Motor neuron (in vitro differentiated cells): ENCODE measurements at regions of chr3 and their contacts with region 1.

Region 1: GRCh38 chr3:39541917-39542329 is 74.4 kb downstream of the MOBP start:
- ATAC-seq: peak in 2 of 8 experiments; percentile 29 to 52
- H3K4me3 ChIP-seq: no peak overlapping the region
- H3K27ac ChIP-seq: no peak overlapping the region
- H3K4me1 ChIP-seq: no peaks in the 10 kb centered on the region

Region 2: GRCh38 chr3:39279745-39280517 is 262.0 kb before region 1 on chr3 and contains the start of gene CX3CR1:
- in situ Hi-C with region 1: no loop called
- ATAC-seq: peak in 2 of 8 experiments; percentile 33 to 39
- H3K4me3 ChIP-seq: no peak within 1 kb of the TSS
- H3K27ac ChIP-seq: no peak within 1 kb of the TSS
- H3K4me1 ChIP-seq: no peaks in the 10 kb centered on the region
- total RNA-seq, gene CX3CR1: 0.08 to 0.40 (median 0.19) TPM in 6 of 8 experiments, not detected in the others

Region 3: GRCh38 chr3:39626198-39626597 is 84.3 kb after region 1 on chr3:
- in situ Hi-C with region 1: no loop called
- ATAC-seq: no peak
- H3K4me3 ChIP-seq: no peak overlapping the region
- H3K27ac ChIP-seq: no peak overlapping the region
- H3K4me1 ChIP-seq: no peaks in the 10 kb centered on the region

Region 4: GRCh38 chr3:39671116-39671515 is 129.2 kb after region 1 on chr3:
- in situ Hi-C with region 1: loop called in 1 of 9 experiments (anchors 25 kb)
- ATAC-seq: no peak
- H3K4me3 ChIP-seq: no peak overlapping the region
- H3K27ac ChIP-seq: no peak overlapping the region
- H3K4me1 ChIP-seq: no peaks in the 10 kb centered on the region

Region 5: DNA sequence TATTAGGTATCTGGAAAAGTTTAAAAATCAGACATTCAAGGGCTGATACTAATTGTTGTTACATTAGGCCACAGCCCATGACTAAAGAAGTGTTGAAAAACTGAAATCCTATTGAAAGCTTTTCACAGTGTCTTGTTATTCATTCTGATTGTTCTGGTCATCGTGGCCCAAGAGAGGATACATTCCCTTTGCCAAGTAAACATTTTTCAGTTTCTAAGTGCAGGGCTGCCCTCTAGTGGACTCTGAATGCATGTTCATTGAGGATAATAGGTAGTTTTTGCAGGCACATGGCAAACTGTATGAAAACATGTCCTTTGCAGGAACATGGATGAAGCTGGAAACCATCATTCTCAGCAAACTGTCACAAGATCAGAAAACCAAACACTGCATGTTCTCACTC is 448.6 kb after region 1 on chr3:
- in situ Hi-C with region 1: loop called in 1 of 9 experiments (anchors 25 kb)
- ATAC-seq: peak in 3 of 8 experiments; percentile 21 to 42 (median 24)
- H3K4me3 ChIP-seq: no peak overlapping the region
- H3K27ac ChIP-seq: no peak overlapping the region
- H3K4me1 ChIP-seq: no peaks in the 10 kb centered on the region